Activated CD8-positive, alpha-beta T cell treated with anti-CD3 and anti-CD28 coated beads for 36 hours (primary cell): ENCODE measurements at regions of chrX and their contacts with region 1.

Region 1: DNA sequence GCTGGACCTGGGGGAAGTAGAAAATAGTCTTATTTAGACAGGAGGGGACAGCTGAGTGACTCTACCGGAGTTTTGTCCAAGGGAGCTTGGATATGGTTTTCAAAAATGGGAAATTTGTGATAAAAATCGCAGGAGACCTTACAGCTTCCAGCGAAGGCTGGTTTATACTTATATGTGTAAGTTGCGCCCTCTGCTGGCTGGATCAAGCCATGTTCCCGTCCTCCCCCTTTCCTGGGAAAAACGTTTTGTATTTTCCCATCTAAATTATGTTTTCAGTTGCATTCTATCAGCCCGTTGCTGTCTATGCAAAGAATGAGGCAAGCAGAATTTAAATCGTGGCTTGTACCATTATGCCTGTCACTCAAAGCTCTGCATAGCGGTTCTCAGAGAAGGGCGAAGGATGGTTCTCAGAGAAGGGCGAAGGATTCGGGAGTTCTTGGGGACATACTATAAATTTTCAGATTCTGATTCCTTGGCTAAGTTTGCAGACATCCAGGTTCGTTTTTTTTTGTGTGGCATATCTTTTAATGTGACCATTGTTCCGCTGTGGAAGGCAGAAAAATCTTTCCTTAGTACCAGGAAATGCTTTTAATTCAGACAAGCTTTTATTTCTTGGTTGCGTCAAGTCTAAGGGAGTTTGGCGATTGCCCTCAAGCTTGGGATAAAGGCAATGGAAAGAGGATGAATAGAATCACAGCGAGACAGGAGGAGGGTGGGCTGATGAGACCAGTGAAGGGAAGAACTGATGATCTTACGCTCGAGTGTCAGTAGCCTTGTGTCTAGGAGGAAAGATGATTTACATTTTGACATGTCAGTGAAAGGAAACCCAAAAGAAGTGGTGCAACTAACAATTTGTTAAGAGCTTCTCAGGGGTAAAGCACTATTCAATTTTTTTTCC is 128.5 kb upstream of the ARX start:
- DNase-seq: peak; percentile 45
- ATAC-seq: no peak
- H3K4me3 Mint-ChIP-seq: no peak overlapping the region
- H3K27ac Mint-ChIP-seq: no peak overlapping the region
- H3K4me1 Mint-ChIP-seq: no peaks in the 10 kb centered on the region
- H3K27me3 Mint-ChIP-seq: peaks cover 5% of the 10 kb centered on the region
- CTCF ChIP-seq: peak; percentile 72

Region 2: GRCh38 chrX:24838629-24839028 is 305.7 kb before region 1 on chrX:
- CTCF ChIA-PET with region 1: interaction called, 24 read pairs
- POLR2A ChIA-PET with region 1: no interaction called
- intact Hi-C with region 1: no loop called
- DNase-seq: peak; percentile 12
- ATAC-seq: no peak
- H3K4me3 Mint-ChIP-seq: no peak overlapping the region
- H3K27ac Mint-ChIP-seq: no peak overlapping the region
- H3K4me1 Mint-ChIP-seq: no peaks in the 10 kb centered on the region
- H3K27me3 Mint-ChIP-seq: no peaks in the 10 kb centered on the region
- CTCF ChIP-seq: peak; percentile 48

Region 3: DNA sequence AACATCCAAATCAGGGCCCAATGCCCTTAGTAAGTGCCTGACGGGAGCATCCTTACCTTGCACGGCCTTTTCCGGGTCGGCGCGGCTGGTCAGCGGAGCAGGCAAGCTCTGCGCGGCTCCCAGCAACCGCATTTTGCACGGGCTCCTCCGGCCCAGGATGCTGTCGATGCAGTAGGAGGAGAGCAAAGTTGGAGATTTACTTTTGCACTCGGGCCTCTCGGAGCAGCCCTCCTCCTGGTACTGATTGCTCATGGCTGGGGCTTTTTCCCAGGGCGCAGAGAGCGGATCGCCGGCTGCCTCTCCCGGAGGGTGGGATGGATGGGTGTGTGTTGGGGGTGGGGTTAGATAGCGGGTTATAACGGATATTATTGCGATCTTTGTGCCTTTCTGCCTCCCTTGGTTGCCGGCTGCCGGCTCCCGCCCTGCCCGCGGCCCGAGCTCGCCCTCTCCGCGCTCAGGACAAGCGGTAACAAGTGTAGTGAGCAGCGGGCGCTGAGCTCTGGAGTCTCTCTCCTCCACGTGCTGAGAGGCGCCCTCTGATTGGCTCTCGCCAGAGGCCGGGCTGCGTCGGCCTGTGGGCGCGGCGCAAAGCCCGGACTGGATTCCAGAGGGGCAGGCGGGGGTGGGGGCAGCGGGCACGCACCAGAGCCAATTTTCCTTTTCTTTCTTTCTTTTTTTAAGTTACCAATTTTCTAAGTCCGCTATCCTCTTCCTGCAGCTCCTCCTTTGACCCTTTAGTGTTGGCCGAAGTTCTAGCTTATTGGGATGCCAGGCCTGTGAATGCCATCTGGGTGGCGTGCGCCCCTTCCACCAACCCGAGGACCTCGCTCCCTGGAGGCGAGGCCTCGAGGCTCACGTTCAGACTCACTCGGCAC is 128.6 kb before region 1 on chrX and contains the start of gene ARX:
- CTCF ChIA-PET with region 1: interaction called, 5 read pairs
- POLR2A ChIA-PET with region 1: no interaction called
- intact Hi-C with region 1: loop called (anchors 10 kb)
- DNase-seq: peak; percentile 50
- ATAC-seq: peak; percentile 78
- H3K4me3 Mint-ChIP-seq: no peak within 1 kb of the TSS
- H3K27ac Mint-ChIP-seq: no peak within 1 kb of the TSS
- H3K4me1 Mint-ChIP-seq: peaks cover 9% of the 10 kb centered on the region
- H3K27me3 Mint-ChIP-seq: peaks cover 61% of the 10 kb centered on the region
- CTCF ChIP-seq: no peak
- total RNA-seq, gene ARX: not detected

Region 4: GRCh38 chrX:25022499-25023325 is 121.6 kb before region 1 on chrX:
- CTCF ChIA-PET with region 1: interaction called, 12 read pairs
- POLR2A ChIA-PET with region 1: no interaction called
- intact Hi-C with region 1: loop called (anchors 10 kb)
- DNase-seq: no peak
- ATAC-seq: no peak
- H3K4me3 Mint-ChIP-seq: no peak overlapping the region
- H3K27ac Mint-ChIP-seq: no peak overlapping the region
- H3K4me1 Mint-ChIP-seq: peaks cover 12% of the 10 kb centered on the region
- H3K27me3 Mint-ChIP-seq: peaks cover 49% of the 10 kb centered on the region
- CTCF ChIP-seq: peak; percentile 27

Region 5: GRCh38 chrX:25131055-25131454 is 13.2 kb before region 1 on chrX:
- CTCF ChIA-PET with region 1: interaction called, 10 read pairs
- POLR2A ChIA-PET with region 1: no interaction called
- intact Hi-C with region 1: no loop called
- DNase-seq: no peak
- ATAC-seq: no peak
- H3K4me3 Mint-ChIP-seq: no peak overlapping the region
- H3K27ac Mint-ChIP-seq: no peak overlapping the region
- H3K4me1 Mint-ChIP-seq: no peaks in the 10 kb centered on the region
- H3K27me3 Mint-ChIP-seq: peaks cover 2% of the 10 kb centered on the region
- CTCF ChIP-seq: no peak

Region 6: GRCh38 chrX:25175743-25176142 is 31.5 kb after region 1 on chrX:
- CTCF ChIA-PET with region 1: no interaction called
- POLR2A ChIA-PET with region 1: no interaction called
- intact Hi-C with region 1: no loop called
- DNase-seq: no peak
- ATAC-seq: no peak
- H3K4me3 Mint-ChIP-seq: no peak overlapping the region
- H3K27ac Mint-ChIP-seq: no peak overlapping the region
- H3K4me1 Mint-ChIP-seq: no peaks in the 10 kb centered on the region
- H3K27me3 Mint-ChIP-seq: peaks cover 5% of the 10 kb centered on the region
- CTCF ChIP-seq: no peak